ENCODE measurements at regions of chr5 and their contacts with region 1.

Region 1: GRCh38 chr5:31531888-31532710 is at the starts of genes C5orf22 and DROSHA:
- DNase-seq: peak; percentile 98
- H3K4me3 Mint-ChIP-seq: peak within 1 kb of the TSS; percentile 91
- H3K27ac Mint-ChIP-seq: peak within 1 kb of the TSS; percentile 96
- H3K4me1 Mint-ChIP-seq: peaks cover 27% of the 10 kb centered on the region
- H3K27me3 Mint-ChIP-seq: no peaks in the 10 kb centered on the region
- total RNA-seq, gene C5orf22: 34.2 and 37.7 TPM in 2 replicates
- total RNA-seq, gene DROSHA: 86.5 and 88.7 TPM in 2 replicates

Region 2: DNA sequence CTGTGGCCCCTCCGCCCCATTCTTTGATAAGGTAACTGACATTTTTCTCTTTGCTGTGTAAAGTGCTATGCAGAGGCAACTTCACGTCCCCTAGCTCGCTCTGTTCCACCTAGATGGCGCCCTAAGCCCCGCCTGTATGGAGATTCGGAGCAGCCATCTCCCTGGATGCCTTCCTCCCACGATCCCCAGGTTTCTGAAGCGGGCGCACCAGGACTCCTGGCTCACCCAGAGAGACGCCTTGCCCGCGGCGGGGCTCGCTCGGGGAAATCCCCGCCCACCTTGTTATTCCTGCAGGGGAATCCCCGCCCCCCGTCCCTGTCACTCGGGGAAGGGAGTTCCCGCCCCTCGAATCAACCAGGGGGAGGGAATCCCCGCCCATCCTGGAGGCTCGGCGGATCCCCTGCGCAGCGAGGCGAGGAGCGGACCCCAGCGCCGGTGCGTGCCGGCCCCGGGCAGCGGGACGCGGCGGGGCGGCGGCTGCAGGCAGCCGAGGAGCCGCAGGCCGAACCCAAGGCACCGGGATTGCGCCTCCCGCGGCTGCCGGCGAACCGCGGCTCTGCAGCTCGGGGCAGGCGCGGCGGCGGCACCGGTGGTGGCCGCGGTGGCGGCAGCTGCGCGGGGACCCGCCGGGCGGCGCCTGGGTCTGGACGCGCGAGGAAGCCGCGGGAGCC is 106.8 kb after region 1 on chr5 and contains the start of gene PDZD2:
- intact Hi-C with region 1: loop called (anchors 5 kb)
- DNase-seq: peak; percentile 88
- H3K4me3 Mint-ChIP-seq: peak within 1 kb of the TSS; percentile 89
- H3K27ac Mint-ChIP-seq: peak within 1 kb of the TSS; percentile 31
- H3K4me1 Mint-ChIP-seq: peaks cover 4% of the 10 kb centered on the region
- H3K27me3 Mint-ChIP-seq: peaks cover 23% of the 10 kb centered on the region
- total RNA-seq, gene PDZD2: not detected in 2 replicates

Region 3: GRCh38 chr5:32312647-32313523 is 780.8 kb after region 1 on chr5 and contains the start of gene MTMR12:
- intact Hi-C with region 1: loop called (anchors 2 kb)
- DNase-seq: peak; percentile 100
- H3K4me3 Mint-ChIP-seq: peak within 1 kb of the TSS; percentile 96
- H3K27ac Mint-ChIP-seq: peak within 1 kb of the TSS; percentile 87
- H3K4me1 Mint-ChIP-seq: peaks cover 28% of the 10 kb centered on the region
- H3K27me3 Mint-ChIP-seq: no peaks in the 10 kb centered on the region
- total RNA-seq, gene MTMR12: 26.5 and 29.8 TPM in 2 replicates

Region 4: DNA sequence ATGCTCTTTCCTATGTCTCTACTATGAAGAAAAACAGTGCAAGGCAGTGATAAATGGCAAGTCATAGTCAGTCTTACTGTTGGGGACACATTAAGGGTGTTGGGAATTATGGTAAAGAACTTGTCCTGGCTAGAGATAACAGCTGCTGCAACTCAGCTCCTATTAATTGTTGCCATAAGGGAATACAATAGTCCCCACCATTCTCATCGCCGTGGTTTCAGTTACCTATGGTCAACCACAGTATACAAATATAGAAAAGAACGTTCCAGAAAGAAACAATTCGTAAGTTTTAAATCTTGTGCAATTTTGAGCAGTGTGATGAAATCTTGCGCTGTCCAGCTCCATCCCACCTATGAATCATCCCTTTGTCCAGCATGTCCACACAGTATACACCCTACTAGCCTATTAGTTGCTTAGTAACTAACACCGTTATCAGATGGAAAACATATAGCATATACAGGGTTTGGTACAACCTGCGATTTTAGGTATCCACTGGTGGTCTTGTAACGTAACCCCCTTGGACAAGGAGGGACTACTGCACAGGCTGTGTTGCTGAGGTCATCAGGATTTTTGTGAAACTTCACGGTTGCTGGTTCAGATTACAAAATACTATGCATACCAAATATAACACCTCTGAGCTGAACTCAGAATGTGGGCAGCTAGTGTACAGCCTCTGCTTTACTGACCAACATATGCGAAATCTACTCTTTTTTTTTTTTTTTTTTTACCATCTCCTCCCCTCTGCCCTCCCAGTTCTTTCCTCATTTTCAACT is 858.9 kb after region 1 on chr5:
- intact Hi-C with region 1: no loop called
- DNase-seq: no peak
- H3K4me3 Mint-ChIP-seq: no peak overlapping the region
- H3K27ac Mint-ChIP-seq: no peak overlapping the region
- H3K4me1 Mint-ChIP-seq: peaks cover 7% of the 10 kb centered on the region
- H3K27me3 Mint-ChIP-seq: no peaks in the 10 kb centered on the region